Dorsolateral prefrontal cortex (tissue), 120 donors: ENCODE measurements at regions of chr10 and their contacts with region 1.

Region 1: GRCh38 chr10:127906548-127907377 is at the start of gene PTPRE:
- DNase-seq: peak in 9 of 10 donors; percentile 48 to 86 (median 67)
- H3K4me3 ChIP-seq: peak within 1 kb of the TSS; percentile 48 to 96 (median 77)
- H3K27ac ChIP-seq: peak within 1 kb of the TSS in 58 of 59 donors; percentile 29 to 95 (median 88)
- H3K27me3 ChIP-seq: no peaks in the 10 kb centered on the region
- CTCF ChIP-seq: peak in 54 of 56 donors; percentile 28 to 95 (median 72)
- total RNA-seq, gene PTPRE: 26.2 to 55.9 (median 39.1) TPM

Region 2: GRCh38 chr10:127762925-127763324 is 143.8 kb before region 1 on chr10:
- intact Hi-C with region 1: no loop called
- DNase-seq: no peak
- H3K4me3 ChIP-seq: no peak overlapping the region
- H3K27ac ChIP-seq: no peak overlapping the region
- H3K27me3 ChIP-seq: peaks cover 0 to 13% (median 0%) of the 10 kb centered on the region in 45 donors
- CTCF ChIP-seq: no peak

Region 3: GRCh38 chr10:127977357-127978009 is 70.7 kb after region 1 on chr10:
- intact Hi-C with region 1: loop called (anchors 2 to 10 kb)
- DNase-seq: peak in 9 of 10 donors; percentile 51 to 83 (median 79)
- H3K4me3 ChIP-seq: peak overlapping the region in 35 of 59 donors; percentile 0 to 48 (median 21)
- H3K27ac ChIP-seq: peak overlapping the region in 53 of 59 donors; percentile 14 to 82 (median 62)
- H3K27me3 ChIP-seq: no peaks in the 10 kb centered on the region
- CTCF ChIP-seq: peak in 9 of 56 donors; percentile 16 to 36 (median 21)

Region 4: DNA sequence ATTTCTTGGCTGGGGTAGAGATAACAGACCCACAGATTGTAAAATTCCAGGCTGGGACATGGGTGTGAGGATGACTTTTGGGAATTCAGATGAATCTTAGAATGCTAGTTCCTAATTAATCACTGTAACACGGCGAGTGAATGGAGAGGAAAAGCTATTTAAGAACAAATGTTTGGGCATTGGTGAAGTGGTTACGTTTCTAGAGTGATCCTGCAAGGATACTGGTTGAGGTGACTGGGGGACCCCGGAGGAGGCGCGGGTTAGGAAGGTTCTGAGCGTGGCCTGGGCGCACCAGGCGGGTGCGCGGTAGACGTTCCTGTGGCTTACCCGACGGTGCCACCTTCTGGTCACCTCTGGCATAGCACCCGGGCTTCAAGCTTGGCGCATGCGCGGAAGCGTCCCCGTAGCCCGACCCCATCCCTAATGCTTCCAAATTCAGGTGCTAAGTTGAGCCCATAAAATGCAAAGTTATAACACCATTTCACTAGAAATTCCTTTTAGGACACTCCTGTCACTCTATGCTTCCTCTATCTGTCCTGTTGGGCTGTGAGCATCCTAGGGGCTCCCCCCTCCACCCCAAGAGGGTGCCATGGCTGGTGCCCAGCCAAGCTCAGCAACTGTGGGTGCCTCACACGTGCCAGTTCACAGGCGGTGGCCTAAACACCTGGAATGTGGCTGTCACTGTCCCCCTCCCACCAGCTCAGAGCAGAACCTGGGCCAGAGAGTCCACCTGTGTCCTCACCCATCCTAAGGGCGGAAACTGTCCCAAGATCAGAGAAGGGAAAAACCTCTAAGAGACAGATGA is 104.6 kb after region 1 on chr10:
- intact Hi-C with region 1: loop called (anchors 1 kb)
- DNase-seq: peak; percentile 74 to 89 (median 83)
- H3K4me3 ChIP-seq: peak overlapping the region in 55 of 59 donors; percentile 1 to 61 (median 33)
- H3K27ac ChIP-seq: peak overlapping the region in 3 of 59 donors; percentile 9 to 44 (median 28)
- H3K27me3 ChIP-seq: no peaks in the 10 kb centered on the region
- CTCF ChIP-seq: peak; percentile 89 to 100 (median 99)

Region 5: DNA sequence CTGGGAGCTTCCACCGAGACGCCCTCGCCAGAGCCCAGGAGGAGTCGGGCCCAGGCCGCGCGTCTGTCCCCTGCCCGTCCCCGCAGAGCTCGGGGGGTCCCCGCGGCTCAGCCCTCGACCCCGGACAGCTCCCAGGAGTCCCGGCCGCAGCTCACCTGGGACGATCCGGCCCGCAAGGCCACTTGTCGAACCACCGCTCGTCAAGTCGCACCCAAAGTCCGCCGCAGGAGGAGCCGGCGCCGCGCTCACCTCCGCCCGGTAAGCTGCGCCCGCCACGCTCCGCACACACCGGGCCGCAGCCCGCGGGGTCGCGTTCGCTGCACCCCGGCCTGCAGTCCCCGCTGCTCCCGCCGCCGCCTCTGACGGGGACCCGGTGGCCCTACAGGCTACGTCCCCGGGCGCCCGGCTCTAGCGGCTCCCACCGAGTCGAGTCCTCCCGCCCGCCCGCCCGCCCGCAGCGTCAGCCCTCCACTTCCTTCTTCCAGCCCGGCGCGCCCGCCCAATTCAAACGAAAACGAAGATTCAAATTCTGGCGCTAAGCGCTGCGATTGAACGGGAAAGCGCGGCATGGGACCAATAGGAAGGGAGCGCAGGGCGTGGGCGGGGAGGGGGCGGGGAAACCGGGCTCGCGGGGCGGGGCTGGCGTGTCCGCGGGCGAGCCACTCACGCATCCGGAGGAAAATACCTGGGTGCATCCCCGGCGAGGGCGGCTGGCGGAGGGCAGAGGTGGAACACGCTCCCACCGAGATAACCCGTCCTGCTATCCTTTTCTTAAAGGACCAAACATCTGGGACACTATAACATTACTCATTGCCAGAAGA is 219.4 kb after region 1 on chr10 and contains the start of gene MKI67:
- intact Hi-C with region 1: no loop called
- DNase-seq: peak; percentile 14 to 69 (median 57)
- H3K4me3 ChIP-seq: peak within 1 kb of the TSS; percentile 39 to 79 (median 62)
- H3K27ac ChIP-seq: no peak within 1 kb of the TSS
- H3K27me3 ChIP-seq: peaks cover 0 to 59% (median 44%) of the 10 kb centered on the region in 45 donors
- CTCF ChIP-seq: peak in 3 of 56 donors; percentile 14 to 23 (median 20)
- total RNA-seq, gene MKI67: 0.03 to 5.4 (median 0.28) TPM in 101 of 120 experiments, not detected in the others